Spleen (tissue), 13 donors: ENCODE measurements at regions of chr2 and their contacts with region 1.

Region 1: GRCh38 chr2:201171259-201171814 is 11.6 kb upstream of the CASP10 start:
- DNase-seq: no peak
- H3K4me3 ChIP-seq: no peak overlapping the region
- H3K27ac ChIP-seq: no peak overlapping the region
- H3K4me1 ChIP-seq: peaks cover 0 to 38% (median 18%) of the 10 kb centered on the region in 6 donors
- H3K27me3 ChIP-seq: no peaks in the 10 kb centered on the region
- CTCF ChIP-seq: no peak
- POLR2A ChIP-seq: no peak

Region 2: GRCh38 chr2:200905618-200906296 is 265.6 kb before region 1 on chr2:
- intact Hi-C with region 1: loop called (anchors 5 kb)
- DNase-seq: peak; percentile 87
- H3K4me3 ChIP-seq: no peak overlapping the region
- H3K27ac ChIP-seq: peak overlapping the region in 1 of 8 donors; percentile 9
- H3K4me1 ChIP-seq: peaks cover 0 to 17% (median 6%) of the 10 kb centered on the region in 6 donors
- H3K27me3 ChIP-seq: no peaks in the 10 kb centered on the region
- CTCF ChIP-seq: peak; percentile 16 to 75 (median 57)
- POLR2A ChIP-seq: no peak